CD14-positive monocyte (primary cell): ENCODE measurements at regions of chr7 and their contacts with region 1.

Region 1: GRCh38 chr7:6392706-6393666 is 54.8 kb downstream of the DAGLB start:
- DNase-seq: peak; percentile 90 to 96 (median 95)
- H3K4me3 ChIP-seq: peak overlapping the region in 1 of 3 experiments; percentile 45
- H3K4me3 Mint-ChIP-seq: peak overlapping the region in 1 of 2 donors; percentile 60
- H3K27ac ChIP-seq: peak overlapping the region; percentile 87 to 88
- H3K27ac Mint-ChIP-seq: peak overlapping the region; percentile 90 to 99 (median 95)
- H3K4me1 ChIP-seq: peaks cover 56 to 58% of the 10 kb centered on the region in 2 donors
- H3K4me1 Mint-ChIP-seq: peaks cover 56% of the 10 kb centered on the region
- H3K27me3 ChIP-seq: no peaks in the 10 kb centered on the region
- H3K27me3 Mint-ChIP-seq: no peaks in the 10 kb centered on the region
- CTCF ChIP-seq: no peak

Region 2: DNA sequence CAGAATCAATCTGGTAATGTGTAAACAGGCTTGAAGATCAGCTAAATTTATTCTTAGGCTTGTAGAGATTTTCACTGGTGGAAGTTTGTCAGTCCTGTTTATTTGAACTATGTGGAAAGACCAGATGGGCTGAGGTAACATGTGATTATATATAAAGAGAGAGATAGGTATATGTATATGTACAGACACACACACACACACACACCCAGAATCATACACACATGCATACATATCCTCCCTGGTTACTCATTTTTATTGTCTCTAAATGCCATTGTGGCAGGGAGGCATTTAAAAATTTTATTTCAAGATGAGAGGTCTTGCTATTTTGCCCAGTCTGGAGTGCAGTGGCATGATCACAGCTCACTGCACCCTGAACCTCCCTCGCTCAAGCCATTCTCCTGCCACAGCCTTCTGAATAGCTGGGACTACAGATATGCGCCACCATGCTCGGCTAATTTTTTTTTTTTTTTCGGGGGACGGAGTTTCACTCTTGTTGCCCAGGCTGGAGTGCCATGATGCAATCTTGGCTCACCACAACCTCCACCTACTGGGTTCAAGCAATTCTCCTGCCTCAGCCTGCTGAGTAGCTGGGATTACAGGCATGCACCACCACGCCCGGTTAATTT is 42.4 kb before region 1 on chr7:
- intact Hi-C with region 1: loop called in 1 of 2 experiments (anchors 5 kb)
- DNase-seq: peak in 2 of 3 donors; percentile 29 to 56
- H3K4me3 ChIP-seq: peak overlapping the region in 1 of 3 experiments; percentile 53
- H3K4me3 Mint-ChIP-seq: peak overlapping the region; percentile 29 to 50
- H3K27ac ChIP-seq: peak overlapping the region; percentile 61 to 66
- H3K27ac Mint-ChIP-seq: peak overlapping the region; percentile 66 to 90 (median 85)
- H3K4me1 ChIP-seq: peaks cover 65% of the 10 kb centered on the region in 2 donors
- H3K4me1 Mint-ChIP-seq: peaks cover 35% of the 10 kb centered on the region
- H3K27me3 ChIP-seq: no peaks in the 10 kb centered on the region
- H3K27me3 Mint-ChIP-seq: peaks cover 0 to 9% (median 0%) of the 10 kb centered on the region in 3 donors
- CTCF ChIP-seq: no peak

Region 3: GRCh38 chr7:6435486-6436384 is 42.7 kb after region 1 on chr7:
- intact Hi-C with region 1: loop called in 1 of 2 experiments (anchors 5 kb)
- DNase-seq: peak; percentile 88 to 92 (median 88)
- H3K4me3 ChIP-seq: peak overlapping the region in 2 of 3 experiments; percentile 22 to 61
- H3K4me3 Mint-ChIP-seq: peak overlapping the region; percentile 73 to 83
- H3K27ac ChIP-seq: peak overlapping the region; percentile 92 to 97
- H3K27ac Mint-ChIP-seq: peak overlapping the region; percentile 95 to 100 (median 100)
- H3K4me1 ChIP-seq: peaks cover 79 to 87% of the 10 kb centered on the region in 2 donors
- H3K4me1 Mint-ChIP-seq: peaks cover 83% of the 10 kb centered on the region
- H3K27me3 ChIP-seq: no peaks in the 10 kb centered on the region
- H3K27me3 Mint-ChIP-seq: peaks cover 0 to 2% (median 0%) of the 10 kb centered on the region in 3 donors
- CTCF ChIP-seq: peak; percentile 99